ENCODE measurements at regions of chr3 and their contacts with region 1.

Region 1: DNA sequence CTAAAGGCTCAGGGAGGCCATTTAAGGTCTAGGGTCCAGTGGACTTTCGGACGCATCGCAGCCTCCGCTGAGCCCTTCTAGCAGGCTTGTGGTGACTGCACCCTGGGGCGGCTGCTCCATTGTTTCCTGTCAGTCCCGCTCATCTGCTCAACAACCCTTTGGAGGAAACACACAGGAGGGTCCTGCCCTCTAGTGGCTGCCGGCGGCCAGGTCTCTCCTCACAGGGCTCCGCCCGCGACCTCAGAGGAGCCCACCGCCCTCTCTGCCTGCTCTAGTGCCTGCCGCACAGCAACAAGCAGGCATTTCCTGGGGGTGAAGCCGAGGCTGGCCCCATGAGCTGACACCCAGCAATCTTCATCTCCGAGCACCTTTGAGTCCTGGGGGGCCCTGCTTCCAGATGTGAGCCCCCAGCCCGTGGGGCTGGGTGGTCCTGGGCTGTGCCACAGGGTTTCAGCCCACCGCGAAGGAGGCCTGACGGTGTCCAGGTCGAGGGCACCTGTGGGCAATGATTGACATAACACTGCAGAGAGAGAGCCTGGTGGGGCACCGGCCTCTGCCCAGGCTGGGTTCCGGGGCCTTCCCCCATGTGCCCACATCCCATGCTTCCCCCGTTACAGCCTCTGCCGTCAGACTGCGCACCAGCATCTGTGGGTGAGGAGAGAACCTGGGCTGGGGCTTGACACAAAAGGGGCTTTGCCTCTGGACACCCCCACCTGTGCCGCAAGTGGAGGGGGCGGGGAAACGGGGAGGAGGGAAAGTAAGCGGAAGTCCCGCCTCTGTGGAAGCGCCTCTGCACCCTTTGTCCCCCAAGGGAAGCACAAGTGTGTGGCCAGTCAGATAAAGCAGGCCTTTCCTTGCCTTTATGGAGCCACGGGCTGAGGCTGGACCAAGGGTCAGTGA is 27.0 kb upstream of the SFMBT1 start:
- DNase-seq: peak; percentile 81 to 93 (median 87)
- ATAC-seq: peak; percentile 92 to 96 (median 94)
- H3K4me3 ChIP-seq: peak overlapping the region; percentile 45 to 77 (median 66)
- H3K27ac ChIP-seq: peak overlapping the region in 10 of 12 donors; percentile 19 to 75 (median 64)
- H3K4me1 ChIP-seq: peaks cover 0 to 19% (median 12%) of the 10 kb centered on the region in 12 donors
- H3K27me3 ChIP-seq: no peaks in the 10 kb centered on the region
- CTCF ChIP-seq: peak; percentile 91 to 99 (median 93)
- POLR2A ChIP-seq: no peak

Region 2: GRCh38 chr3:52323526-52324295 is 749.2 kb before region 1 on chr3:
- intact Hi-C with region 1: no loop called
- DNase-seq: peak in 2 of 5 donors; percentile 19 to 44
- ATAC-seq: peak in 2 of 4 donors; percentile 27 to 38
- H3K4me3 ChIP-seq: no peak overlapping the region
- H3K27ac ChIP-seq: no peak overlapping the region
- H3K4me1 ChIP-seq: peaks cover 0 to 12% (median 2%) of the 10 kb centered on the region in 12 donors
- H3K27me3 ChIP-seq: no peaks in the 10 kb centered on the region
- CTCF ChIP-seq: no peak
- POLR2A ChIP-seq: no peak

Region 3: DNA sequence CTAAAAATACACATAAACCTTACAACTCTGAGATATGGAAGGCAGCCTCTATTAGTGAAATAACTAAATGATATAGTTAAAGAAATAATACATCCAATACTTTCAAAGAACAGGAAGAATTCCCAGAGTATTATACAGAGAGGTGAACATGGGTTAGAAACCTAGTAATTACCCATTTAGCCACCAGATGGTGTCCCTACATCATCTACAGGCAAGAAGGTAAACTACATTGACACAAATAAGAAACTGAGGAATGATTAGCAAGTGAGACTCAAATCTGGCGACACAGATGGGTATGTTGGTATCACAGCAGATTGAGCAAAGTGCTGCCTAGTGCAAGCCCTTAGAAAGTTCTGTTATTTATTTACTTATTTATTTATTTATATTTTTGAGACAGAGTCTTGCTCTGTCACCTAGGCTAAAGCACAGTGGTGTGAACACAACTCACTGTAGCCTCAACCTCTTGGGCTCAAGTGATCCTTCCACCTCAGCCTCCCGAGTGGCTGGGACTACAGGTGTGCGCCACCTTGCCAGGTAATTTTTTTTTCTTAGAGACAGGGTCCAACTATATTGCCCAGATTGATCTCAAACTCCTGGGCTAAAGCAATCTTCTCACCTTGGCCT is 330.4 kb before region 1 on chr3:
- intact Hi-C with region 1: loop called (anchors 2 to 10 kb)
- DNase-seq: no peak
- ATAC-seq: peak in 2 of 4 donors; percentile 34 to 46
- H3K4me3 ChIP-seq: no peak overlapping the region
- H3K27ac ChIP-seq: no peak overlapping the region
- H3K4me1 ChIP-seq: no peaks in the 10 kb centered on the region
- H3K27me3 ChIP-seq: no peaks in the 10 kb centered on the region
- CTCF ChIP-seq: peak; percentile 27 to 64 (median 60)
- POLR2A ChIP-seq: no peak

Region 4: GRCh38 chr3:52845691-52846431 is 227.0 kb before region 1 on chr3:
- intact Hi-C with region 1: loop called (anchors 1 to 10 kb)
- DNase-seq: peak in 2 of 5 donors; percentile 43 to 64
- ATAC-seq: peak in 2 of 4 donors; percentile 17 to 23
- H3K4me3 ChIP-seq: peak overlapping the region in 3 of 12 donors; percentile 7 to 21 (median 13)
- H3K27ac ChIP-seq: peak overlapping the region; percentile 42 to 90 (median 72)
- H3K4me1 ChIP-seq: peaks cover 6 to 57% (median 43%) of the 10 kb centered on the region in 12 donors
- H3K27me3 ChIP-seq: no peaks in the 10 kb centered on the region
- CTCF ChIP-seq: peak; percentile 17 to 54 (median 42)
- POLR2A ChIP-seq: no peak

Region 5: GRCh38 chr3:52925405-52926313 is 147.2 kb before region 1 on chr3:
- intact Hi-C with region 1: loop called in 4 of 10 experiments (anchors 5 to 10 kb)
- DNase-seq: no peak
- ATAC-seq: no peak
- H3K4me3 ChIP-seq: no peak overlapping the region
- H3K27ac ChIP-seq: peak overlapping the region in 1 of 12 donors; percentile 28
- H3K4me1 ChIP-seq: peaks cover 0 to 34% (median 0%) of the 10 kb centered on the region in 12 donors
- H3K27me3 ChIP-seq: no peaks in the 10 kb centered on the region
- CTCF ChIP-seq: no peak
- POLR2A ChIP-seq: no peak

Region 6: GRCh38 chr3:53293867-53294266 is 221.0 kb after region 1 on chr3:
- intact Hi-C with region 1: no loop called
- DNase-seq: no peak
- ATAC-seq: peak in 3 of 4 donors; percentile 61 to 75 (median 66)
- H3K4me3 ChIP-seq: no peak overlapping the region
- H3K27ac ChIP-seq: no peak overlapping the region
- H3K4me1 ChIP-seq: peaks cover 0 to 22% (median 0%) of the 10 kb centered on the region in 12 donors
- H3K27me3 ChIP-seq: no peaks in the 10 kb centered on the region
- CTCF ChIP-seq: no peak
- POLR2A ChIP-seq: no peak